Aorta (tissue), 5 donors: ENCODE measurements at regions of chrX and their contacts with region 1.

Region 1: GRCh38 chrX:18425199-18426003 is at the start of gene CDKL5:
- DNase-seq: peak; percentile 98
- ATAC-seq: peak; percentile 97
- H3K4me3 ChIP-seq: peak within 1 kb of the TSS; percentile 47 to 77
- H3K27ac ChIP-seq: peak within 1 kb of the TSS in 1 of 2 donors; percentile 73
- H3K4me1 ChIP-seq: peaks cover 0 to 2% of the 10 kb centered on the region in 2 donors
- H3K27me3 ChIP-seq: no peaks in the 10 kb centered on the region
- total RNA-seq, gene CDKL5: 21.9 to 28.7 TPM

Region 2: DNA sequence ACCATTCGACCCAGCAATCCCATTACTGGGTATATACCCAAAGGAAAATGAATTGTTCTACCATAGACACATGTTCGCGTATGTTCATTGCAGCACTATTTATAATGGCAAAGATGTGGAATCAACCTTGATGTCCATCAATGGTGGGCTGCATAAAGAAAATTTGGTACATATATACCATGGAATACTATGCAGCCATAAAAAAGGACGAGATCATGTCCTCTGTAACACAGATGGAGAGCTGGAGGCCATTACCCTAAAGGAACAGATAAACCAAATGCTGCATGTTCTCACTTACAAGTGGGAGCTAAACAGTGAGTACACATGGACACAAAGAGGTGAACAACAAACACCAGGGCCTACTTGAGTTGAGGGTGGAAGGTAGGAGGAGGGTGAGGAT is 116.0 kb before region 1 on chrX:
- intact Hi-C with region 1: no loop called
- DNase-seq: no peak
- ATAC-seq: no peak
- H3K4me3 ChIP-seq: no peak overlapping the region
- H3K27ac ChIP-seq: no peak overlapping the region
- H3K4me1 ChIP-seq: no peaks in the 10 kb centered on the region
- H3K27me3 ChIP-seq: no peaks in the 10 kb centered on the region

Region 3: GRCh38 chrX:18549643-18550042 is 124.2 kb after region 1 on chrX:
- intact Hi-C with region 1: loop called (anchors 10 kb)
- DNase-seq: no peak
- ATAC-seq: no peak
- H3K4me3 ChIP-seq: no peak overlapping the region
- H3K27ac ChIP-seq: no peak overlapping the region
- H3K4me1 ChIP-seq: no peaks in the 10 kb centered on the region
- H3K27me3 ChIP-seq: no peaks in the 10 kb centered on the region

Region 4: DNA sequence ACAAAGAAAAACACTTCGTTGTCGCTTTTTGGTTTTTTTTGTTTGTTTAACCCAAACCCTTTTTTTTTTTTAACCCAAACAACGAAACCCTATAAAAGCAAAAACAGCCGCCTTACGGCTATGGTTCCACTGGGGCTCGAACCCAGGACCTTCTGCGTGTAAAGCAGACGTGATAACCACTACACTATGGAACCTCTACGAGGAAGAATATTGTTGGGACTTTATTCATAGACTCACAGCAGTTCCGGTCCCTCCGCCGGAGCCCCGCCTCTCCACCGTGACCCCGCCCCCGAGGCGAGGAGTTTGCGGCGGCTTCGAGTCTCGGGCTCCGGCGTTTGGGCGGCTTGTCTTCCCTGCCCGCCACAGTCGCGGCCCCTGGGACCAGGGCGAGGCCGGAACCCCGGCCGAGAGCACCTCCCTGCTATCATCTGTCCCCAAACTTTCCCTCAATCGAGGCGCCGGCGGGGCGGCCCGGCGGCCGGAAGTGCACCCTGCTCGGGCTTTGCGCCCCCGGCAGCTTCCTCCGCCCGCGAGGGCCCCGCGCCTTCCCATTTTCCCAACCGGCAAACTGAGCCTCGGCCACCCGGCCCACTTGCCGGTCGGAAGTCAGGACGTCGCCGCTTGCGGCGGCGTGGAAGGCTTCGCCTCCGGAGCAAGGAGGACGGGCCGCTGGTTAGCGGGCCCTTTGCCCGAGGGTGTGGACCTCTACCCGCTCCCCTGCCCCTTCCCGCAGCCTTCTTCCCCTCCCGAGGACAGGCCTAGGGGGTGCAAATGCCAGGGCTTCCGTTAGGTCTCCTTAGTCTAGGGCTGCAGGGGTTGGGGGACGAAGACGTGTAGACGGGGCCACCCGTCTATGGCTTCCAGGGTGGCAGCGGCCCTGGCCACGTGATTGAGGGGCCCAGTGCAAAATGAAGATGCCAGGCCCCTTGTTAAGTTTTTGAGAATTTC is 249.7 kb after region 1 on chrX:
- intact Hi-C with region 1: loop called (anchors 10 kb)
- DNase-seq: peak; percentile 82 to 91
- ATAC-seq: peak; percentile 96
- H3K4me3 ChIP-seq: peak overlapping the region; percentile 54 to 92
- H3K27ac ChIP-seq: peak overlapping the region; percentile 49 to 94
- H3K4me1 ChIP-seq: peaks cover 0 to 2% of the 10 kb centered on the region in 2 donors
- H3K27me3 ChIP-seq: no peaks in the 10 kb centered on the region

Region 5: GRCh38 chrX:18886344-18887161 is 461.2 kb after region 1 on chrX:
- intact Hi-C with region 1: loop called in 1 of 2 experiments (anchors 2 kb)
- DNase-seq: peak; percentile 86 to 91
- ATAC-seq: peak; percentile 87
- H3K4me3 ChIP-seq: no peak overlapping the region
- H3K27ac ChIP-seq: peak overlapping the region; percentile 38 to 81
- H3K4me1 ChIP-seq: no peaks in the 10 kb centered on the region
- H3K27me3 ChIP-seq: no peaks in the 10 kb centered on the region

Region 6: GRCh38 chrX:18899796-18900447 is 474.5 kb after region 1 on chrX:
- intact Hi-C with region 1: loop called in 1 of 2 experiments (anchors 2 kb)
- DNase-seq: peak in 1 of 2 donors; percentile 69
- ATAC-seq: no peak
- H3K4me3 ChIP-seq: no peak overlapping the region
- H3K27ac ChIP-seq: no peak overlapping the region
- H3K4me1 ChIP-seq: no peaks in the 10 kb centered on the region
- H3K27me3 ChIP-seq: no peaks in the 10 kb centered on the region